B cell (primary cell): ENCODE measurements at regions of chr4 and their contacts with region 1.

Region 1: GRCh38 chr4:139603576-139604387 is 47.8 kb upstream of the SETD7 start:
- DNase-seq: peak; percentile 63
- ATAC-seq: peak; percentile 39
- H3K4me3 ChIP-seq: no peak overlapping the region
- H3K4me3 Mint-ChIP-seq: no peak overlapping the region
- H3K27ac ChIP-seq: no peak overlapping the region
- H3K27ac Mint-ChIP-seq: no peak overlapping the region
- H3K4me1 ChIP-seq: peaks cover 8 to 10% of the 10 kb centered on the region in 2 donors
- H3K4me1 Mint-ChIP-seq: peaks cover 16% of the 10 kb centered on the region
- H3K27me3 ChIP-seq: peaks cover 0 to 2% (median 0%) of the 10 kb centered on the region in 4 experiments
- H3K27me3 Mint-ChIP-seq: peaks cover 14% of the 10 kb centered on the region
- CTCF ChIP-seq: peak; percentile 59

Region 2: GRCh38 chr4:139593091-139593564 is 10.7 kb before region 1 on chr4:
- CTCF ChIA-PET with region 1: interaction called, 11 read pairs
- POLR2A ChIA-PET with region 1: no interaction called
- intact Hi-C with region 1: no loop called
- DNase-seq: no peak
- ATAC-seq: no peak
- H3K4me3 ChIP-seq: no peak overlapping the region
- H3K4me3 Mint-ChIP-seq: no peak overlapping the region
- H3K27ac ChIP-seq: no peak overlapping the region
- H3K27ac Mint-ChIP-seq: no peak overlapping the region
- H3K4me1 ChIP-seq: no peaks in the 10 kb centered on the region
- H3K4me1 Mint-ChIP-seq: no peaks in the 10 kb centered on the region
- H3K27me3 ChIP-seq: peaks cover 0 to 17% (median 2%) of the 10 kb centered on the region in 4 experiments
- H3K27me3 Mint-ChIP-seq: peaks cover 22% of the 10 kb centered on the region
- CTCF ChIP-seq: no peak

Region 3: GRCh38 chr4:139651282-139652194 is 47.8 kb after region 1 on chr4:
- CTCF ChIA-PET with region 1: interaction called, 74 read pairs
- POLR2A ChIA-PET with region 1: no interaction called
- intact Hi-C with region 1: loop called (anchors 1 kb)
- DNase-seq: peak; percentile 82
- ATAC-seq: peak; percentile 81
- H3K4me3 ChIP-seq: no peak overlapping the region
- H3K4me3 Mint-ChIP-seq: no peak overlapping the region
- H3K27ac ChIP-seq: no peak overlapping the region
- H3K27ac Mint-ChIP-seq: no peak overlapping the region
- H3K4me1 ChIP-seq: no peaks in the 10 kb centered on the region
- H3K4me1 Mint-ChIP-seq: peaks cover 4% of the 10 kb centered on the region
- H3K27me3 ChIP-seq: no peaks in the 10 kb centered on the region
- H3K27me3 Mint-ChIP-seq: peaks cover 15% of the 10 kb centered on the region
- CTCF ChIP-seq: peak; percentile 98

Region 4: DNA sequence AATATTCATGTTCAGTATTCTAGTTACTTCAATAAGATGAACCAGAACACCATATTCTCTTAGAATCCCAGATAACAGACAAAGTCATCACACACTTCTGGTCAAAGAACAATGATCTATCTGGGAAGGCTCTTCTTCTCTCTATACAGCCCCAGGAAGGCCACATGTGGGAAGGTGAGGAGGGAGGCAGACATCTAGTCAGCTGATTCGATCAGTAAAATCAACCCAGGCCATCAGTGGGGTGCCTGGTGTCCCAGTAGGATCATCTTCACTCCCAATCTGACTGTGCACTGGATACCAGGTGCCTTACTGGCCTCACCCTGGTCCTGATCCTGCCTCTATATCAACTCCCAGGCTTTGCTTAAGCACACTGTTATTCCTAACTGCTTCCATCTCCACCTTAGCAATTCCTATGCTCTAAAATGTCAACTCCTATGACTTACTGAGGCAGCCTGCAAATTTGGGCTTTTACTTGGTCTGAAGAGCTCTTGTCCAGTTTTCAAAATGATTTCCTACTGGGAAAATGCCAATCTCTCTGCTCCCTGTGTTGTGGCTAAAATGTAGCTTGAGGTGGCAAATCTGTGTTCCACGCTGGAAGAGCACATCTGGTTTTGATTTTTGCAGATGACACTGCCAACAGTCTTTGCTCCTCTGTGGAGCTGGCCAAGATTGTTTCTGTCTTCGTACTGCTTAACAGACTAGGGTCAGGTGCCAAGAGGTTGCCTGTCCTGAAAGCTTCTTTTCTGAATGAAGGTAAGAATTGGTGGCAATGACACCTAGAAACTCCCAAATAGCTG is 190.6 kb after region 1 on chr4:
- CTCF ChIA-PET with region 1: no interaction called
- POLR2A ChIA-PET with region 1: no interaction called
- intact Hi-C with region 1: no loop called
- DNase-seq: no peak
- ATAC-seq: no peak
- H3K4me3 ChIP-seq: no peak overlapping the region
- H3K4me3 Mint-ChIP-seq: no peak overlapping the region
- H3K27ac ChIP-seq: no peak overlapping the region
- H3K27ac Mint-ChIP-seq: no peak overlapping the region
- H3K4me1 ChIP-seq: no peaks in the 10 kb centered on the region
- H3K4me1 Mint-ChIP-seq: peaks cover 10% of the 10 kb centered on the region
- H3K27me3 ChIP-seq: no peaks in the 10 kb centered on the region
- H3K27me3 Mint-ChIP-seq: peaks cover 6% of the 10 kb centered on the region
- CTCF ChIP-seq: no peak

Region 5: GRCh38 chr4:140326395-140326993 is 722.7 kb after region 1 on chr4:
- CTCF ChIA-PET with region 1: interaction called, 5 read pairs
- POLR2A ChIA-PET with region 1: no interaction called
- intact Hi-C with region 1: loop called (anchors 2 kb)
- DNase-seq: peak; percentile 9
- ATAC-seq: no peak
- H3K4me3 ChIP-seq: no peak overlapping the region
- H3K4me3 Mint-ChIP-seq: no peak overlapping the region
- H3K27ac ChIP-seq: no peak overlapping the region
- H3K27ac Mint-ChIP-seq: no peak overlapping the region
- H3K4me1 ChIP-seq: peaks cover 5 to 7% of the 10 kb centered on the region in 2 donors
- H3K4me1 Mint-ChIP-seq: peaks cover 4% of the 10 kb centered on the region
- H3K27me3 ChIP-seq: no peaks in the 10 kb centered on the region
- H3K27me3 Mint-ChIP-seq: peaks cover 12% of the 10 kb centered on the region
- CTCF ChIP-seq: peak; percentile 15

Region 6: GRCh38 chr4:140711910-140712309 is 1108.1 kb after region 1 on chr4:
- CTCF ChIA-PET with region 1: no interaction called
- POLR2A ChIA-PET with region 1: no interaction called
- intact Hi-C with region 1: no loop called
- DNase-seq: no peak
- ATAC-seq: no peak
- H3K4me3 ChIP-seq: no peak overlapping the region
- H3K4me3 Mint-ChIP-seq: no peak overlapping the region
- H3K27ac ChIP-seq: no peak overlapping the region
- H3K27ac Mint-ChIP-seq: no peak overlapping the region
- H3K4me1 ChIP-seq: peaks cover 33 to 45% of the 10 kb centered on the region in 2 donors
- H3K4me1 Mint-ChIP-seq: peaks cover 68% of the 10 kb centered on the region
- H3K27me3 ChIP-seq: no peaks in the 10 kb centered on the region
- H3K27me3 Mint-ChIP-seq: no peaks in the 10 kb centered on the region
- CTCF ChIP-seq: no peak